Motor neuron (in vitro differentiated cells): ENCODE measurements at regions of chr22 and their contacts with region 1.

Region 1: GRCh38 chr22:17910561-17911311 is 113.6 kb downstream of the MICAL3 start:
- ATAC-seq: peak; percentile 91 to 99 (median 96)
- H3K4me3 ChIP-seq: peak overlapping the region in 2 of 5 donors; percentile 4 to 6
- H3K27ac ChIP-seq: peak overlapping the region; percentile 60 to 78
- H3K4me1 ChIP-seq: peaks cover 33 to 36% of the 10 kb centered on the region in 2 donors

Region 2: GRCh38 chr22:18001040-18001893 is 90.5 kb after region 1 on chr22:
- in situ Hi-C with region 1: loop called in 1 of 9 experiments (anchors 25 kb)
- ATAC-seq: peak; percentile 87 to 94 (median 92)
- H3K4me3 ChIP-seq: peak overlapping the region; percentile 86 to 98 (median 95)
- H3K27ac ChIP-seq: peak overlapping the region; percentile 91 to 99
- H3K4me1 ChIP-seq: peaks cover 6 to 7% of the 10 kb centered on the region in 2 donors

Region 3: GRCh38 chr22:18057568-18058209 is 147.0 kb after region 1 on chr22:
- in situ Hi-C with region 1: loop called in 3 of 9 experiments (anchors 25 kb)
- ATAC-seq: peak in 6 of 8 experiments; percentile 14 to 59 (median 37)
- H3K4me3 ChIP-seq: no peak overlapping the region
- H3K27ac ChIP-seq: no peak overlapping the region
- H3K4me1 ChIP-seq: peaks cover 5 to 21% of the 10 kb centered on the region in 2 donors